ENCODE measurements at regions of chr4 and their contacts with region 1.

Region 1: DNA sequence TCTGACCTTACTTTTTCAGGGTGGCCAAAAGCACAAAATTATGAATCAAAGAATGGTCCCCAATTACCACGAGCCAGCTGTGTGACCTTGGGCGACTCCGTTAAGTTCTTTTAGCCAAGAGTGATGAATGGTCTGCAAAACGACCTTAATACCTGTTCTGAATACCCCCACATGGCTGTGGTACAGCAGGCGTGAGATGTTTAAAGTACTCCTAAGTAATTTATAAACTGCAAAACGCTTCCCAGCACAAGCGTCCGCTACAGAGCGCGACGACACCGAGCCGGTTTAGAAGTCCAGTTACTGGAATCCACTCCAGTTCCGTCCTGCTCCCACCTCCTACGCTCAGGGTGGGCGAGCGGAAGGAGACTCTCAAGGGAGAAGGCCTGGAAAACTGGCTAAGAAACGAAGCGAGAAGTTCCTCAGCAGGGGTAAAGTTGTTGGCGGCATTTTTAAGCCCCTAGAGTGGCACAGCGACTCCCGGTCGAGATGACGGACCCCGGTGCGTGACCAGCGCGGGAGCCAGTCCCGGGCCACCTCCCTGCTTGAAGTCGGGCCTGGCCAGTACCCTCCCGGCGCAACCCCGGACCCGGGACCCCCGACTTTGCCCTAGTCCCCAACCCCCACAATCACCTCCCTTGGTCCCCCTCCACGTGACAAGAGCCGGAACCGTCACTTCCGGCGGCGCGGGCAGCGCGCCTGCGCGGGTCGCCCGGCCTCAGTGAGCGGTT is 683 bp upstream of the BMP2K start:
- DNase-seq: peak; percentile 90
- H3K4me3 Mint-ChIP-seq: peak overlapping the region; percentile 93
- H3K27ac Mint-ChIP-seq: peak overlapping the region; percentile 91
- H3K4me1 Mint-ChIP-seq: peaks cover 22% of the 10 kb centered on the region
- H3K27me3 Mint-ChIP-seq: no peaks in the 10 kb centered on the region

Region 2: GRCh38 chr4:78056265-78057129 is 719.0 kb before region 1 on chr4:
- CTCF ChIA-PET with region 1: no interaction called
- POLR2A ChIA-PET with region 1: no interaction called
- intact Hi-C with region 1: loop called (anchors 5 kb)
- DNase-seq: peak; percentile 52
- H3K4me3 Mint-ChIP-seq: peak overlapping the region; percentile 53
- H3K27ac Mint-ChIP-seq: no peak overlapping the region
- H3K4me1 Mint-ChIP-seq: peaks cover 19% of the 10 kb centered on the region
- H3K27me3 Mint-ChIP-seq: peaks cover 46% of the 10 kb centered on the region

Region 3: DNA sequence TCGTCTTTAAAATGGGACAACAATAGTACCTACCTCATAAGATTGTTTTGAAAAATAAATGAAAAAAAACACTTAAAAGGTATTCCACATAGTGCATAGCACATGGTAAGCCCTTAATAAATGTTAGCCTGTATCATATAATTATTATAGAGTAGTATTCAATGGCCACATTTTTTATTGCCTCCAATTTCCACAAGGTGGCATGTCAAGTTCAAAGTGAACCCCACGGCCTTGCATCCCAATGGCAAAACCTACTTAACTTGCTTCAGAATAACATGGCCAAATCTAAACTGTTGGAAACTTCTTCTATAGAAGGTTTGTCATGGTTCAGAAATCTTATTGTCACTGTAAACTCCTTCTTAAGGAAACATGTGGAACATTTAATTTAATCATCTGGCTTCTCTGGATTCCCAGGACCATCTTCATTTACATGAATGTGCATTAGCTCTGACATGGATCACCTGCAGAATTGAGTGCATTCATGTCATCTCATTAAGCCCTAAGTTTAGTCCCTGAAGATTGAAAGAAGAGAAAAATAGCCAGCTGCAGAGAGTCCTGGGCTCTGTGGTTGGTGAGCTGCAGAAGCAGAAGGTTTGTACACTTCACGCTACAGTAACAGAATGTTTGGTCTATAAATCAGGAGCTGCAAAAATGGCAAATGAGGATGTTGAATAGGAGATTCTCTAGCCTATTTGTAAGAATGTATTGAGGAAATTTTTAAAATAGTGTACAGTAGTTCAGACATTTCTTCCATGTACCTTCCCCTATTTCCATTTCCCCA is 162.9 kb before region 1 on chr4:
- CTCF ChIA-PET with region 1: no interaction called
- POLR2A ChIA-PET with region 1: no interaction called
- intact Hi-C with region 1: loop called (anchors 5 kb)
- DNase-seq: peak; percentile 15
- H3K4me3 Mint-ChIP-seq: no peak overlapping the region
- H3K27ac Mint-ChIP-seq: no peak overlapping the region
- H3K4me1 Mint-ChIP-seq: peaks cover 23% of the 10 kb centered on the region
- H3K27me3 Mint-ChIP-seq: no peaks in the 10 kb centered on the region

Region 4: DNA sequence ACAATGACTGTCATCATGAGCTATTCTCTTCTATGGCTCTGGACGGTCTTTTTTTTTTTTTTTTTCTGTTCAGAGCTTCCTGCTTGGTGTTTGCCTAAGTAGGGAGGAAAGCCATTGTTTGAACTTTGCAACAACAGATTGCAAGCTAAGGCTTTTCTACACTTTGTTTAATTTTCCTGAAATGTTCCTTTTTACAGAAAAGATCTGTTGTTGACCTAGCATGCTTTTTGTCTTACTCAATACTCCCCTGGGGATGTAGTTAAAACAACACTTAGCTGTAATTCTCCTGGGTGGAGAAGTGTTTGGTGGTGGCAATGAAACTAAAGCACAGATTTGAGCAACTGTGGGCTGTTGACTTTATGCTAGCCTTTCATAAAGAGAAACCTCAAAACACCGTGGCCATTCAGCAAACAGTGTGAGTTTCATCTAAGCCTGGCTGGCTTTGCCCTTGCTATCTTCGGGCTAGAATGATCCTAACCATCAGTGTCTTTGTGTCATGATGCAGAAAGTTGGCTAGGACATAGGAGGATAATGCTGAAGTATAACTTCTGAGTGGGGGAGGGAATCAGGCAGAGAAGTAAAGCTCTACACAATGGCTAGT is 113.4 kb before region 1 on chr4:
- CTCF ChIA-PET with region 1: no interaction called
- POLR2A ChIA-PET with region 1: no interaction called
- intact Hi-C with region 1: loop called (anchors 1 kb)
- DNase-seq: peak; percentile 11
- H3K4me3 Mint-ChIP-seq: no peak overlapping the region
- H3K27ac Mint-ChIP-seq: no peak overlapping the region
- H3K4me1 Mint-ChIP-seq: peaks cover 34% of the 10 kb centered on the region
- H3K27me3 Mint-ChIP-seq: peaks cover 2% of the 10 kb centered on the region

Region 5: DNA sequence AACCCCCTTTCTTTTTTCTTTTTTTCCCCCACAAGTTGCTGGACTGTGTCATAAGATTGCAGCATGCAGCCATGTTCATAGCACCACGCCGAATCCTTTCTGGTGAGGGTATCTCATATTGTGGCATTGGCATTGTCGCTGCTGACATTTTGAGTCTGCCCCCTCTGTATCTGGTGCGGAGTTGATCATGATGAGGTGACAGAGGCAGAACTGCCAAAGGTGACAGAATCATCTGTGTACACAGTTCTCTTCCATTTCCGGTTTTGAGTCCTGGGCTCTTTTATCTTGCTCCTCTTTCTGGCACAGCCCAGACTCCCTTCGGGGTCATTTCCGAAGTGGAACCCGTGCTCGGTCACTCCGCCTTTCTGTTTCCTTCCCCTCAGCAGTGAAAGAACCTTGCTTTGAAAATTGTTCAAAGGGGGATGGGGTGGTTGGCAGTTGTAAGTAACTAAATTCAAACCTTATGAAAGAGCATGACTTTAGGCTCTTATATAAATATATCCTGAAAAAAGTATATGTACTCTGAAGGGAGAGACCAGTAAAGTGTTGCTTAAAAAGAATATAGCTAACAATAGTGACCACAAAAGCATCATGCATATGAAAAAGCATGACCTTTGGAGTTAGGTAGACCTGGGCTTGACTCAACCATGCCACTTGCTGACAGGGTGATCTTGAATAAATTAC is 54.3 kb before region 1 on chr4:
- CTCF ChIA-PET with region 1: no interaction called
- POLR2A ChIA-PET with region 1: no interaction called
- intact Hi-C with region 1: loop called (anchors 2 kb)
- DNase-seq: peak; percentile 57
- H3K4me3 Mint-ChIP-seq: peak overlapping the region; percentile 14
- H3K27ac Mint-ChIP-seq: peak overlapping the region; percentile 21
- H3K4me1 Mint-ChIP-seq: peaks cover 16% of the 10 kb centered on the region
- H3K27me3 Mint-ChIP-seq: no peaks in the 10 kb centered on the region

Measured in activated CD4-positive, alpha-beta memory T cell treated with anti-CD3 and anti-CD28 coated beads for 36 hours (primary cell).